ENCODE measurements at regions of chr1 and their contacts with region 1.

Region 1: DNA sequence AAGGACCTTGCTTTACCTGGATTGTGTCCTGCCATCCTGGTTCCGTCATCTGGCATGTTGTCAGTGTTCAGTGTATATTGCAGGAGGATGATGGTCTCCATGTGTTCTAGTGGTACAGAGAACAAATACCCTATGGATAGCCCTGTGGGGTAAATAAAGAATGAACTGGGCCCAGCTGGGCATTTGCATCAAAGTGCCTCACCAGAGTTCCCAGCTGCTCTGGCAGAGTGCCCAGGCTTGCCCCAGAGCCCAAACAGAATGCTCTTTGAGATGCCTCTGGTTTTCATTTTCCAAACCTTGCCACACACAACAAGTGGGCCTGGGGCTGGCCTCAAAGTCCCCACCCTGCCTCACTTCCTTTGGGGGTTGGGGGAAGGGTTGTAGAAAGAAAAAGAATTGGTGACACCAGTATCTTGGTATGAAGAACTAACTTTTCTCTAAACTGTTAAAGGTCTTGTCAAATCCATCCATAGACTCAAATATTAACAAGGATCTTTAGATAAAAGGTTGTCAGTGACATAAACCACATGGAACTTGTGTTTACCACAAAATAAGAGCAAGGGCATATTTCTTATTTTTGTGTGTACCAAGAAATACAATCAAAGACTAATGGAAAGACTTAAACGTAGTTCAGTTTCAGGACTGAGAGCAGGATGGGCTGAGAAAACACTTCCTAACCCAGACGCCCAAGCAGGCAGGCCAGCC is 82.2 kb downstream of the LMO4 start:
- DNase-seq: no peak
- ATAC-seq: no peak
- H3K4me3 ChIP-seq: no peak overlapping the region
- H3K27ac ChIP-seq: no peak overlapping the region
- H3K4me1 ChIP-seq: no peaks in the 10 kb centered on the region
- H3K27me3 ChIP-seq: no peaks in the 10 kb centered on the region
- CTCF ChIP-seq: no peak

Region 2: DNA sequence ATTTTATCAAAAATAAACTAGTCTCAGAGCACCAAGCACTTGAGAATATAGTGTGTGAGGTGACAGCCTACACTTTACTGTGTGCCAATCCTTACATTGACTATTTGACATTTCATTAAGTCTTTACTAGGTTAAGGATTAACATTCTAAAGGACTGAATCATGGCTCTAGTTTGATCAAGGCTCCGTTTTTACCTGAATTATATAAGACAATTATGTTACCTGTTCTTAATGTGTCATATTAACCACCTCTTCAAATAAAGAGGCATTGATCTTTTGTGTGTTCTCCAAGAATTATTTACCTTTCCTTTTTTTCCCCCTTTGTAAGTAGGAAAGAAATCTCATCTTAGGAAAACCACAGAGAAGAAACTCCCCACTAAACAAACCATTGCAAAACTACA is 306.8 kb before region 1 on chr1:
- CTCF ChIA-PET with region 1: no interaction called
- POLR2A ChIA-PET with region 1: interaction called, 13 read pairs
- in situ Hi-C with region 1: no loop called
- intact Hi-C with region 1: no loop called
- DNase-seq: no peak
- ATAC-seq: no peak
- H3K4me3 ChIP-seq: no peak overlapping the region
- H3K27ac ChIP-seq: no peak overlapping the region
- H3K4me1 ChIP-seq: no peaks in the 10 kb centered on the region
- H3K27me3 ChIP-seq: no peaks in the 10 kb centered on the region
- CTCF ChIP-seq: no peak

Region 3: GRCh38 chr1:87362834-87363426 is 48.0 kb before region 1 on chr1:
- CTCF ChIA-PET with region 1: no interaction called
- POLR2A ChIA-PET with region 1: no interaction called
- in situ Hi-C with region 1: no loop called
- intact Hi-C with region 1: no loop called
- DNase-seq: no peak
- ATAC-seq: no peak
- H3K4me3 ChIP-seq: no peak overlapping the region
- H3K27ac ChIP-seq: no peak overlapping the region
- H3K4me1 ChIP-seq: no peaks in the 10 kb centered on the region
- H3K27me3 ChIP-seq: no peaks in the 10 kb centered on the region
- CTCF ChIP-seq: no peak

Region 4: DNA sequence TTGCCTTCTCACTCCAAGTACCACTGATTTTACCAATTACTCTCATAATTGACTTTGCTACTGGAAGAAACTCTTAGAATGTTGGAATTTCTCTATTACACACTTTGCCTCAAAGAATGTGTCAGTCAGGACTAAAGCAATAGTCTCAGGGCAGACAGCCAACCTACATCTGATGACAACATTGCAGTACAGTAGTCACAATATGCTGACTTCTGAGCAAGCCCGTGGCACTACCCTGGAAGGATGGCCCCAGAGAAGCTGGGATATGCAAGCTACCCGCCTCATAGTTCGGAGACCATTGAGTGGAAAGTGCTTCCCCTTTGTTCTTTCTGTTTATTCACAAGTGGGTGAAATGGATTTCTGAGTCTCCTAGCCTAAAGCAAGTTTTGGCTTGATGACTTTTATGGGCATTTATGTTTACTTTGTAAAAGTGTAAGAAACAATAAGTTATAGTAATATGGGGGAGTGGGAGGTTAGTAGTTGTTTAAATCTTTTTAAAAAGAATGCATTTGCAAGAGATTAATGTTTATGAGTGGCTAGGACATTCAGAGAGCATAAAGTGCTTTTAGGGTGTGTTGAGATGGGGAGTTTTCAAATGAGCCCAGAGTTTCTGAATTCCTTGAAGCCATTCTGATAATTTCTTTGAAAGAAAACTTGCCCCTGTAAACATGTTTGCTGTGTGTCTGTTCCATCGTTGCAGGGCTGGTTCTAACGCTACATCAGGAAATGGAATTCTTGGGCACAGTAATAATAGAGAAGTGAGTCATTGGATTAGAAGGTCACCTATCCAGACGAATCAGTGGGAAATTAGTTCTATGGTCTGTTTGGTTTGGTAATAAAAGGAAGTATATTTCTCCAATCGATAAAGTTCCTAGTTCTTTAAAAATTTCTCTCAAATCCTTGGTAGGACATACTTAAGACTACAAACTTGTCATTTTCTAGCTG is 18.4 kb before region 1 on chr1:
- CTCF ChIA-PET with region 1: no interaction called
- POLR2A ChIA-PET with region 1: no interaction called
- in situ Hi-C with region 1: no loop called
- intact Hi-C with region 1: no loop called
- DNase-seq: no peak
- ATAC-seq: peak; percentile 56
- H3K4me3 ChIP-seq: no peak overlapping the region
- H3K27ac ChIP-seq: no peak overlapping the region
- H3K4me1 ChIP-seq: peaks cover 4% of the 10 kb centered on the region; the same call in 1 of the 2 replicates
- H3K27me3 ChIP-seq: no peaks in the 10 kb centered on the region
- CTCF ChIP-seq: no peak

Measured in Panc1 (cell line).